WTC11 (cell line): ENCODE measurements at regions of chr11 and their contacts with region 1.

Region 1: GRCh38 chr11:33742249-33742851 is 6.1 kb upstream of the CD59 start:
- DNase-seq: no peak
- ATAC-seq: no peak
- H3K4me3 Mint-ChIP-seq: no peak overlapping the region
- H3K27ac Mint-ChIP-seq: no peak overlapping the region
- H3K4me1 Mint-ChIP-seq: no peaks in the 10 kb centered on the region
- H3K27me3 Mint-ChIP-seq: no peaks in the 10 kb centered on the region
- CTCF ChIP-seq: no peak

Region 2: DNA sequence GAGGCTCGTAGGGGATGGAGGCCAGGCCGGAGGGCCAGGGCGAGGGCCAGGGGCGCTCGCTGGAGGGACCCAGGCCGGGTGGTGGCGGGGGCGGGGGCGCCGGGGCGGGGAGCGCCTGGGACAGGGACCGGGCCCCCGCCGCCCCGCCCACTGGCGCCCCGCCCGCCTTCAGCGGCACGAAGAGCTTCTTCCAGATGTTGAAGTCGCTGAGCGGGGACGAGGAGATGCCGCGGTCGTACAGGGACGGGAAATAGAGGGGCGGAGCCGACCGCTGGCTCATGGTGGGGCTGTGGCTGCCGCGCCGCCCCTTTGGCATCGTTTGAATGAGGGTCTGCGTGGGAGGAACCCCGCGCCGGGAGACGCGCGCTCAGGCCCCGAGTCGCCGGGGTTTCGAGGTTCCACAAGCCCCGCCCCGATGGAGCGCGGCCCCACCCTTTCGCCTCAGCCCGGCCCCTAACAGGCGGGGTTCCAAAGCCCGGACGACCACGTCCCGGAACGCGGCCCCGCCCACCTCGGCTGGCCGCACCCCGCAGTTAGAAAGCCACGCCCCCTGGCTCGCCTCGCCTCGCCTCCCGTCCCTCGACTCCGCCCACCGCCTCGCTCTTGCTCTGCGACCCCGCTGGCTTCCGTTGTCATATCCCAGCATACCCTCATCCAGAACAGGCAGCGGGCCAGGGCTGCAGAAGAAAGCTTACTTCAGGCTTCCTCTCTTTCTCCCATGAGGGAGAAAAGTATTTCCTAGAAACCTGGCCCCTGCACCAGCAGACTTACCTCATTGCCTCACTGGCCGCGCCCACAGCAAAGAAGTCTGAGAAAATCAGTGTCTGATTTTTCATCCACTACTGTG is 41.7 kb before region 1 on chr11 and contains the start of gene C11orf91:
- CTCF ChIA-PET with region 1: interaction called, 10 read pairs
- POLR2A ChIA-PET with region 1: no interaction called
- DNase-seq: peak; percentile 98
- ATAC-seq: peak; percentile 92
- H3K4me3 Mint-ChIP-seq: peak within 1 kb of the TSS; percentile 80
- H3K27ac Mint-ChIP-seq: peak within 1 kb of the TSS; percentile 73
- H3K4me1 Mint-ChIP-seq: peaks cover 30% of the 10 kb centered on the region
- H3K27me3 Mint-ChIP-seq: peaks cover 16% of the 10 kb centered on the region
- CTCF ChIP-seq: no peak
- total RNA-seq, gene C11orf91: 0.22 TPM in 1 of 3 replicates, not detected in the others

Region 3: GRCh38 chr11:33716236-33716635 is 26.1 kb before region 1 on chr11:
- CTCF ChIA-PET with region 1: interaction called, 22 read pairs
- POLR2A ChIA-PET with region 1: no interaction called
- DNase-seq: no peak
- ATAC-seq: no peak; the same call in 1 of the 2 replicates
- H3K4me3 Mint-ChIP-seq: no peak overlapping the region
- H3K27ac Mint-ChIP-seq: no peak overlapping the region
- H3K4me1 Mint-ChIP-seq: no peaks in the 10 kb centered on the region
- H3K27me3 Mint-ChIP-seq: no peaks in the 10 kb centered on the region
- CTCF ChIP-seq: no peak

Region 4: GRCh38 chr11:34028425-34028824 is 286.1 kb after region 1 on chr11:
- CTCF ChIA-PET with region 1: no interaction called
- POLR2A ChIA-PET with region 1: no interaction called
- DNase-seq: no peak
- ATAC-seq: no peak
- H3K4me3 Mint-ChIP-seq: no peak overlapping the region
- H3K27ac Mint-ChIP-seq: no peak overlapping the region
- H3K4me1 Mint-ChIP-seq: peaks cover 10% of the 10 kb centered on the region
- H3K27me3 Mint-ChIP-seq: no peaks in the 10 kb centered on the region
- CTCF ChIP-seq: no peak